MCF 10A (cell line): ENCODE measurements at regions of chrX and their contacts with region 1.

Region 1: DNA sequence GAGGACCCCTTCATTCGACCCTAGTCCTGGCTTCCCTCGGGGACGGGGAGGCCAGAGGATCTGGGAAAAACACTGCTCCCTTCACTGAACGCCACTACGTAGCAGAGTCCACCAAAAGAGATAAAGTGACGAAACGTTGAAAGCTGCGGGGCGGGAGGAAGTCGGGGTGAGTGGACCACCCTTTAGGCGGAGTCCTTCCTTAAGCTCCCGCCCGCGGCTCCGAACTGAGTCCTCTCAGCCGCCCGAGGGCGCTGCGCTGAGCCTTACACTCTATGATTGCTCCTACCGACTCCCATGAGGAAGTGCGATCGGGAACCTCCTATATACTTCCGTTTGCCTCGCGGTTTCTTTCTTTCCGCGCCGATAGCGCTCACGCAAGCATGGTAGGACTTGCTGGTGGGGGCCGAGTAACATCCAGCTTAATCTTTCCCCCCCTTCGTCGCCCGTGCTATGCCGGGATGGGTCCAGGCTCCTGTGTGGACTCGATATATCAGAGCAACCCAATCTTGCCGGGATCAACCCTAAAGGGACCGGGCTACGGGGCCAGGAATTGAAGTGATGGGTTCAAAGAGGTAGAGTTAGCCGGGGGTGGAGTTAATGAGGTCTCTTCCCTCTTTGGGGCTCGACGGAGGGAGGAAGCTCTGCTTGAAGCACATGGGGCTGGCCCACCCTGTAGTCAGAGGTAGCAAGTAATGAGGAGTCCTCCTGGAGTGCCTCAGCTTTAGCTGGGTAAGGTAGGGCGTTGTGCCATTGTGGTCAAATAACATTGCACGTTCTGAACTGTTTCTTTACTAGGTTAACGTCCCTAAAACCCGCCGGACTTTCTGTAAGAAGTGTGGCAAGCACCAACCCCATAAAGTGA is at the start of gene RPL36A:
- DNase-seq: peak; percentile 87
- H3K4me3 Mint-ChIP-seq: peak within 1 kb of the TSS; percentile 85
- H3K27ac Mint-ChIP-seq: peak within 1 kb of the TSS; percentile 90
- H3K4me1 Mint-ChIP-seq: no peaks in the 10 kb centered on the region
- H3K27me3 Mint-ChIP-seq: peaks cover 22% of the 10 kb centered on the region
- CTCF ChIP-seq: peak; percentile 40
- total RNA-seq, gene RPL36A: 445 and 482 TPM in 2 replicates

Region 2: GRCh38 chrX:101348452-101349192 is 42.3 kb before region 1 on chrX and contains the start of gene TIMM8A:
- CTCF ChIA-PET with region 1: interaction called, 5 read pairs
- POLR2A ChIA-PET with region 1: interaction called, 54 read pairs
- intact Hi-C with region 1: no loop called
- DNase-seq: peak; percentile 76
- H3K4me3 Mint-ChIP-seq: peak within 1 kb of the TSS; percentile 83
- H3K27ac Mint-ChIP-seq: peak within 1 kb of the TSS; percentile 13
- H3K4me1 Mint-ChIP-seq: no peaks in the 10 kb centered on the region
- H3K27me3 Mint-ChIP-seq: peaks cover 27% of the 10 kb centered on the region
- CTCF ChIP-seq: no peak
- total RNA-seq, gene TIMM8A: 14.9 and 17.2 TPM in 2 replicates

Region 3: DNA sequence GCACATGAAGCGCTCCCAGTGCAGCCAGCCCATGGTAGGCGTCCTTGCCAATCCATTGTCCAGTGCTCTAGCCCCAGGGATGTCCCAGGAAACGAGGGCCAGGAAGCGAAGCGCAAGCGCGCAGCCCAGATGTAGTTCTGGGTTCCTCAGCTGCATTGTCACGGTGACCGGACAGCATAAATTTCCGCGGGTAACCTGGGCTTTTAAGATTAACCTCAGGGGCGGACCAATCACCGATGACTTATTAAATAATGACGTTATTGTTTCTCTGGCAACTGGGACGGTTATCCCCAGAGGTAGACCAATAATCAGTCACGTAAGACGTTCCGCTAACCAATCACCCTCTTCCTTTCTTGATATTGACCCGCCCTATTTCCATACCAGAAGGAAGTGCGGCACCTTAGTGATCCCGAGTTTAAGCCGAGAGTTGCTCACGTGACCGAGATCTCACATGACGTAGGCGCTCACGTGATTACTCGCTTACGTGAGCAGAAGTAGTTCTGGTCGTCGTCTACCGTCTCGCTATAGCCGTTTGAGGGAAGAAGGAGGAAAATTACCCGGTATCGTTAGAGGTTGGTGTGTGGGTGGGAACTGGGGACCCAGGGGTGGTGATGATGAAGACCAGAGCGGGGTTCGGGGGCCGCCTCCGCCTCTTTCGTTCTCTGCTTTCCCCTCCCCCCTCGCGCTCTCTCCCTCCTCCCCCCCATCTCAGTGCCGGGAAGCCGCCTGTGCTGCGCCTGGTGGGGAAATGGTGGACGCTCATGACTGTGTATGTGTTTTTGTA is 17.0 kb after region 1 on chrX and contains the starts of genes GLA and HNRNPH2:
- CTCF ChIA-PET with region 1: interaction called, 5 read pairs
- POLR2A ChIA-PET with region 1: interaction called, 18 read pairs
- intact Hi-C with region 1: no loop called
- DNase-seq: peak; percentile 96
- H3K4me3 Mint-ChIP-seq: peak within 1 kb of the TSS; percentile 81
- H3K27ac Mint-ChIP-seq: peak within 1 kb of the TSS; percentile 91
- H3K4me1 Mint-ChIP-seq: peaks cover 6% of the 10 kb centered on the region
- H3K27me3 Mint-ChIP-seq: peaks cover 26% of the 10 kb centered on the region
- CTCF ChIP-seq: no peak
- total RNA-seq, gene GLA: 11.7 and 13.3 TPM in 2 replicates
- total RNA-seq, gene HNRNPH2: 35.5 and 44.2 TPM in 2 replicates